Right lobe of liver (tissue), 6 donors: ENCODE measurements at regions of chr5 and their contacts with region 1.

Region 1: DNA sequence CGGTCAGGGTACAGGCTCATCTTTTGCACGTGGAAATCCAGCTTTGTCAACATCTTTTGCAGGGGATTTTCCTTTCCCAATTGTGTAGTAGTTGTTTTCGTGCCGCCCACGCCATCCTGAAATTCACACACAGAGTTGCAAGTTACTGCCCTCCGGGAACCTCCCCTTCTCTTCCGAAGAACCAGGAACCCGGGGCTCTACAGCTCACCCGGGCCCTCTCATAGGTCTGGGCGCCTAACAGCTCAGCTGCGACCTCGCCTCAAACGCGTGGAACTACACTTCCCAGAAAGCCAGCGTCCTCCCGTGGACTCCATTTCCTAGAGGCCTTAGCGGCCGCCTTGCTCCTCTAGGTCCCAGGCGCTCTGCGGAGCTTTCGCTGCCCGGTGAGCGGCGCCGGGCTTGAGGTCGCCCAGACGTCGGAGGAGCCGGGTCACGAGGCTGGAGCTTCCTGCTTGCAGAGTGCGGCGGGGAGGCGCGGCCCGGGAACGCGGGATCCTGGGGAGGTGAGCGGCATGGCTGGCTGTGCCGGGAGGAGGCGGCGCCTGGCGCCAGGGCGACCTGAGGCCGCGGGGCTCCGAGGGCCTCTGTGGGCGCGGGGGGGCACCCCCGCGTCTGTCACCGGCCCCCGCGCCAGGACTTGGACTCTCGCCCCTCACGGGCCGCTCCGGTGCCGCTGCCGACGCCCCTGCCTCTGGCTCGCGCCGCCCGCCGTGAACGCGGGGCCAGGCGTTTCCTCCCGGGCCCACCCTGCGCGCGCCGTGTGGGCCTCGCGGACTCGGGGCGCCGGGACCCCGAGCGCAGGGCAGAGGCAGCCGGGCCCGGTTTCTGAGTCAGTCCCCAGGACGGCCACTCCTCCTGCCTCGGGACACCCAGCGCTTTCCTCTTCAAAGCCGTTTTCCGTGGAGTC is at the start of gene ZNF354B:
- DNase-seq: peak; percentile 93 to 95 (median 94)
- ATAC-seq: peak; percentile 99
- H3K4me3 ChIP-seq: peak within 1 kb of the TSS; percentile 66 to 86 (median 81)
- H3K27ac ChIP-seq: peak within 1 kb of the TSS; percentile 50 to 80 (median 61)
- H3K4me1 ChIP-seq: no peaks in the 10 kb centered on the region
- H3K27me3 ChIP-seq: no peaks in the 10 kb centered on the region
- CTCF ChIP-seq: peak; percentile 1 to 23 (median 16)
- POLR2A ChIP-seq: peak; percentile 81
- total RNA-seq, gene ZNF354B: 2.0 to 7.2 (median 5.0) TPM

Region 2: GRCh38 chr5:178732281-178732680 is 127.6 kb before region 1 on chr5:
- intact Hi-C with region 1: loop called in 1 of 2 experiments (anchors 10 kb)
- DNase-seq: no peak
- ATAC-seq: no peak
- H3K4me3 ChIP-seq: no peak overlapping the region
- H3K27ac ChIP-seq: no peak overlapping the region
- H3K4me1 ChIP-seq: no peaks in the 10 kb centered on the region
- H3K27me3 ChIP-seq: no peaks in the 10 kb centered on the region
- CTCF ChIP-seq: no peak
- POLR2A ChIP-seq: no peak

Region 3: GRCh38 chr5:178786859-178787760 is 72.8 kb before region 1 on chr5:
- intact Hi-C with region 1: no loop called
- DNase-seq: peak in 1 of 3 donors; percentile 22
- ATAC-seq: no peak
- H3K4me3 ChIP-seq: no peak overlapping the region
- H3K27ac ChIP-seq: no peak overlapping the region
- H3K4me1 ChIP-seq: no peaks in the 10 kb centered on the region
- H3K27me3 ChIP-seq: no peaks in the 10 kb centered on the region
- CTCF ChIP-seq: no peak
- POLR2A ChIP-seq: no peak

Region 4: GRCh38 chr5:179060116-179061008 is 200.5 kb after region 1 on chr5 and contains the start of gene ZNF354C:
- intact Hi-C with region 1: loop called in 1 of 2 experiments (anchors 5 kb)
- DNase-seq: peak; percentile 88 to 93 (median 90)
- ATAC-seq: peak; percentile 99 to 100 (median 100)
- H3K4me3 ChIP-seq: peak within 1 kb of the TSS; percentile 83 to 92 (median 88)
- H3K27ac ChIP-seq: peak within 1 kb of the TSS; percentile 36 to 55 (median 41)
- H3K4me1 ChIP-seq: no peaks in the 10 kb centered on the region
- H3K27me3 ChIP-seq: no peaks in the 10 kb centered on the region
- CTCF ChIP-seq: no peak
- POLR2A ChIP-seq: peak; percentile 28
- total RNA-seq, gene ZNF354C: 0.81 to 2.4 (median 1.4) TPM